ENCODE measurements at regions of chr1 and their contacts with region 1.

Region 1: GRCh38 chr1:152623203-152623844 is 421 bp upstream of the LCE3A start:
- DNase-seq: peak; percentile 17
- H3K4me3 ChIP-seq: no peak overlapping the region
- H3K27ac ChIP-seq: no peak overlapping the region
- H3K4me1 ChIP-seq: no peaks in the 10 kb centered on the region
- H3K27me3 ChIP-seq: no peaks in the 10 kb centered on the region
- CTCF ChIP-seq: peak; percentile 50

Region 2: DNA sequence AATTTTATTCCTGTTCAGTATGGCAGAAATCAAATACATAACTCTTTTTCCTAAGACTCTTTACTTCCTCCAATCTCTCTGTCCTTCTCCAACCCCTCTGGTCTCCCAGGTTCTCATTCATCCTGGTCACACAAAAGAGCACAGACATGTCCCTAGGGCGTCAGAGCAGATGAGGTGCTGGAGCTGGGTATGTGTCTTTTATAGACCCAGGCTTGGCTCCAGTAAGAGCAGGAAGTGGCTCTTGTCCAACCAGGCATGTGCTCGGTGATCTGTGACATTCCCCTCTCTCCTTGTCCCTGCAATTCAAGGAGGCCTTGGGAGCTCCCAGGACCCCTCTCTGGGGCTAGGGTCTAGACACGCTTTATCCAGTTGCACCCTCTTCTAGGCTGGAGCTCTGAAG is 21.8 kb after region 1 on chr1:
- CTCF ChIA-PET with region 1: no interaction called
- POLR2A ChIA-PET with region 1: no interaction called
- intact Hi-C with region 1: no loop called
- DNase-seq: no peak
- H3K4me3 ChIP-seq: no peak overlapping the region
- H3K27ac ChIP-seq: no peak overlapping the region
- H3K4me1 ChIP-seq: no peaks in the 10 kb centered on the region
- H3K27me3 ChIP-seq: peaks cover 8% of the 10 kb centered on the region
- CTCF ChIP-seq: no peak

Region 3: DNA sequence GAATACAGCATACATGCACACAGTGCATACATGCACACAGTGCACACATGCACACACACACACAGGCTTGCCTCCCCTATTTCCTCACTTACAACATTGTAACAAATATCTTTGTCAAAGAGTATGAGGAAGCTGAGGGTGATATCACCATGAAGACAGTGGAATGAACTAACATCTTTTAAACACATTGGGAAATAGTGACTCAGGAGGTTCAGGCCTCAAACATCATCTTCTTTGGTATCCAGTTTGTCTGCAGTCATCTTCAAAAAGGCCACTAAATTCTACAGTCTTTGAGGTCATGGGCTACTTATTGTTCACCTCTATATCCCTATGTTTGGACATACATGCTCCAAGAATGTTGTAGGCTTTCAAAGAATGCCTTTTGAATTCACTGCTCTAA is 60.5 kb after region 1 on chr1:
- CTCF ChIA-PET with region 1: no interaction called
- POLR2A ChIA-PET with region 1: no interaction called
- intact Hi-C with region 1: loop called (anchors 10 kb)
- DNase-seq: no peak
- H3K4me3 ChIP-seq: no peak overlapping the region
- H3K27ac ChIP-seq: no peak overlapping the region
- H3K4me1 ChIP-seq: no peaks in the 10 kb centered on the region
- H3K27me3 ChIP-seq: peaks cover 8% of the 10 kb centered on the region
- CTCF ChIP-seq: no peak

Measured in A673 (cell line).